Posterior cingulate gyrus (tissue), 11 donors: ENCODE measurements at regions of chr9 and their contacts with region 1.

Region 1: DNA sequence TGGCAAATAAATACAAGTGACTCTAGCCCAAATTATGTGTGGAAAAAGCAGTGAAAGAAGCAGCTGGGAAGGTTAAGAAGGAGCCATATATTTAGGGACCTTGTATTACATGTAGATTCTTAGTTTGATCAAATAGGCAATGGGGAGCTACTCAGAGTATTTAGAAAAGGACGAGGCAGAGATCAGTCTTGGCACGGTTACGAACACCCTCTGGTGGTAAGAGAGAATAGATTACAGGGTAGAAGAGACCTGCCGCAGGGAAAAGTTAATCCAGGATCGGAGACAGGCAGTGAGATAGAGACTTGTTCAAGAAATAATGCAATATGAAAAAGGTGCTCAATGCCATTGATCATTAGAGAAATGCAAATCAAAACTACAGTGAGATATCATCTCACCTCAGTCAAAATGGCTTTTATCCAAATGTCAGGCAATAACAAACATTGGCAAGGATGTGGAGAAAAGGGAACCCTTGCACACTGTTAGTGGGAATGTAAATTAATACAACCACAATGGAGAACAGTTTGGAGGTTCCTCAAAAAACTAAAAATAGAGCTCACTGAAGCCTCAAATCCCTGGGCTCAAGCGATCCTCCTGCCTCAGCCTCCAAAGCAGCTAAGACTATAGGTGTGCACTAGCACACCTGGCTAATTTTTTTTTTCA is 12.0 kb downstream of the INIP start:
- DNase-seq: peak in 3 of 10 donors; percentile 13 to 52 (median 37)

Region 2: DNA sequence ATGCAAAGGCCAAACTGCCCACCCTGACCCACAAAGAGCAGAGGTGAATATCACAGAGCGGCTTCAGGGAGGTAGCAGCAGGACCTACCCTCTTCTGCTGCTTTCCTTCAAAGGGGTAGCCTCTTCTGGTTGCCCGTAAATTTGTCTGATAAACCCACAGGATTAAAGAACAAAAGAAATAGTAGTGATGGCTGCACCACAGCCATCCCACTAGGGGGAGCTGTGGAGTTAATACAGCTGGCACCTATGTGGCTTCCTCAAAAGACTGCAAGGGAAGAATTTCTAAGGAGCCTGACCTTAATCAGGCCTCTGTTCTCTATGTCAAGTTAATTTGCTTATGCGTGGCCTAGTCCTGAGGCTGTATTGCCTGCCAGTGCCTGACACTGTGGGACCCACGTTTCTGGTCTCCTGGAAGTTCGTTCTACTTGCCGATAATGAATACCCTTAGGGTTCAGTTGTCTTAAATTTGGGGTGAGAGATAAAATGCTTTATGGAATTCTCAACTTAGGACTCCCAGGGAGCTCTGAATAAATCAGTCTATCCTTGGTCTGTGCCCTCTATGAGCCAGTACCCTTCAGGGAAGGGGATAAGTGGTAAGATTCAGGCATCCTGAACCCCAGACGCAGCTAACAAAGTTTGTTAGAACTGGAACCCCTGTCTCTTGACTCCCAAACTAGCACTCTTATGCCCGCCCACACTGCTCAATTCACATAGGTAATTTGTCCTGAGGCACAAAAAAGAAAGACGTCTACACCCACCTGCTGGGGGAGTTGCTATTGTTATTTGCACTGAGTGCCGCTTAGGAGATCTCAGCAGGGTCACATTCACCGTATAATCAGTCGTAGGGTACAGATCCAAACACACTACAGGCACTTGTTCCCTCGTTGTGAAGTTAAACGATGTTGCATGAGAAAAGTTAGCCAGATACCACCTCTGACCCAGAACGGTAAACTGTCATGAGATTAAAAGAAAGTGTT is 607.9 kb before region 1 on chr9:
- intact Hi-C with region 1: loop called (anchors 5 kb)
- DNase-seq: peak in 6 of 10 donors; percentile 23 to 91 (median 55)

Region 3: GRCh38 chr9:112443200-112443599 is 262.7 kb before region 1 on chr9:
- intact Hi-C with region 1: loop called (anchors 5 kb)
- DNase-seq: peak in 1 of 10 donors; percentile 34

Region 4: DNA sequence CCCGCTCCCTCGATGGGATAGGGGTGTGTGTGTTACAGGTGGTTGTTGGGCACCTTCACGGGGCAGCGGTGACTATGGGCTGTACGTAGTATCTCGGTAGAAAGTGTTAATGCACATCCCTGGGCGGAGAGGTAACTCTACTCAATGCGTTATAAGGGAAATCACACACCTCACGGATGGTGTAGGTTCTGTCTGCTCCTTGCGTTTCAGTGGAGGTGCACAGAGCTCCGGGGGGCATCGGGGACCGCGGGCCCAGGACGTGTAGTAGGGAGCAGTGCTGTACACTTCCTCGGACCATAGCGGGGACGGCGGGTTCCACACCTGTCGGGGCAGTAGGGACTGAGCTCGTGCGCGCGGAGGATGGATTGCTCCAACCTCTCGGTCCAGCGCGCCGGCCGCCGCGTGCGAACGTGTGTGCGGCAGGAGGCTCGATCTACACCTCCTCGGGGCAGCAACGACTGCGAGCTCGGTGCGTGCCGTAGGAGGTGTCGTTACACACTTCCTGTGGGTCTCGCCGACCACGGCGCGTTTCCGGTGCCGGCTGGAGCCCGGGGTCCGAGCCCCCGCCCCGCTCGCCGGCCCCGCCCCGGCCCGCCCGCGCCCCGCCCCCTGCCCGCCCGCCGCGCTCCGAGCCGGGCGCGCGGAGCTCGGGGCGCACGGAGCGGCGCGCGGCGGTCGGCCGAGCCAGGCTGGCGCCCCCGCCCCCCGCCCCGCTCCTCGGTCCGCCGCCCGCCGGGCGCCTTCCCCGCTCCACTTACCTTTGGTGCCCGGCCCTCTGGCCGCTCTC is 219.5 kb before region 1 on chr9 and contains the start of gene KIAA1958:
- intact Hi-C with region 1: loop called (anchors 2 kb)
- DNase-seq: peak; percentile 65 to 97 (median 76)